ENCODE measurements at regions of chr15 and their contacts with region 1.

Region 1: DNA sequence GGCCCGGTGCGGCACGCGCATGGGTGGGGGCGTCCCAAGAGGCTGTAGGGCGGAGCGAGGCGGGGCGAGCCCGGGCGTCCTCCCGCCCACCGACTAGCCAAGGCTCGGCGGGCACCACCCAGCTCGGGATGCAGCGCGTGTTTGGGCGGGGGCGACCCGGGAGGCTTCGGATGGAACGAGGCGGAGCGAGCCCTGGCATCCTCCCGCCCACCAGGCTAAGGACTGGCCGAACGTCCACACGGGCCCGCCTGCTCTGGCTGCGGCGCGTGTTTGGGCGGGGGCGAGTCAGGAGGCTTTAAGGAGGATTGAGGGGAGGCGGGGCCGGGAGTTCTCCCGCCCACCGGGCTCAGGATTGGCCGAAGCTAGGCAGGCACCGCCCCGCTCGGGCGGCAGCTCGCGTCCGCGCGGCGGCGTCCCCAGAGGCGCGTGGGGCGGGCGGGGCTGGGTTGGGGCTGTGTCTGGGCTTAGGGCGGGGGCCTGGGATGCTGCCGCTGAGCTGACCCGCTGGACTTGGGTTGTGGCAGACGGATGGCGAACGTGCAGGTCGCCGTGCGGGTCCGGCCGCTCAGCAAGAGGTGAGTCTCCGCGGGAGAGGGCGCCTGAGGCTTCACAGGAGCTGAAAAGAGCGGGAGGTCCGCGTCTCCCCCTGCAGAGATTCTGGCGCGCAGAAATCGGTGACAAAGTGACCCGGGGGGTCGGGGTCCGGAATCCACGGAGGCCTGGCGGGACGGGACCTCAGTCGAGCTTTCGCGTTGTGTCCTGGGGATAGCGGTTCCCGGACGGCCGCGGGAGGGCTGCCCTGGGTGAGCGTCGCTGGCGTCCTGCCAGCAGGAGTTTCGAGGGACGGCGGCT is at the start of gene STARD9:
- DNase-seq: peak; percentile 98
- ATAC-seq: peak; percentile 95
- H3K4me3 ChIP-seq: peak within 1 kb of the TSS; percentile 89
- H3K27ac ChIP-seq: no peak within 1 kb of the TSS
- H3K4me1 ChIP-seq: peaks cover 18% of the 10 kb centered on the region
- H3K27me3 ChIP-seq: no peaks in the 10 kb centered on the region
- CTCF ChIP-seq: no peak
- total RNA-seq, gene STARD9: 4.9 and 5.0 TPM in 2 replicates

Region 2: GRCh38 chr15:42107473-42107872 is 467.9 kb before region 1 on chr15:
- CTCF ChIA-PET with region 1: no interaction called
- POLR2A ChIA-PET with region 1: no interaction called
- intact Hi-C with region 1: no loop called
- DNase-seq: no peak
- ATAC-seq: no peak
- H3K4me3 ChIP-seq: no peak overlapping the region
- H3K27ac ChIP-seq: no peak overlapping the region
- H3K4me1 ChIP-seq: peaks cover 2% of the 10 kb centered on the region; the same call in 1 of the 2 replicates
- H3K27me3 ChIP-seq: no peaks in the 10 kb centered on the region
- CTCF ChIP-seq: no peak

Region 3: GRCh38 chr15:42495361-42496212 is 79.8 kb before region 1 on chr15 and contains the start of gene SNAP23:
- CTCF ChIA-PET with region 1: no interaction called
- POLR2A ChIA-PET with region 1: interaction called, 16 read pairs
- intact Hi-C with region 1: no loop called
- DNase-seq: peak; percentile 92
- ATAC-seq: peak; percentile 89
- H3K4me3 ChIP-seq: peak within 1 kb of the TSS; percentile 77
- H3K27ac ChIP-seq: peak within 1 kb of the TSS; percentile 61
- H3K4me1 ChIP-seq: peaks cover 36% of the 10 kb centered on the region
- H3K27me3 ChIP-seq: no peaks in the 10 kb centered on the region
- CTCF ChIP-seq: no peak
- total RNA-seq, gene SNAP23: 40.2 and 45.1 TPM in 2 replicates

Region 4: GRCh38 chr15:43008150-43008549 is 432.7 kb after region 1 on chr15:
- CTCF ChIA-PET with region 1: no interaction called
- POLR2A ChIA-PET with region 1: no interaction called
- intact Hi-C with region 1: no loop called
- DNase-seq: no peak
- ATAC-seq: no peak
- H3K4me3 ChIP-seq: no peak overlapping the region
- H3K27ac ChIP-seq: no peak overlapping the region
- H3K4me1 ChIP-seq: no peaks in the 10 kb centered on the region
- H3K27me3 ChIP-seq: no peaks in the 10 kb centered on the region
- CTCF ChIP-seq: no peak

Region 5: DNA sequence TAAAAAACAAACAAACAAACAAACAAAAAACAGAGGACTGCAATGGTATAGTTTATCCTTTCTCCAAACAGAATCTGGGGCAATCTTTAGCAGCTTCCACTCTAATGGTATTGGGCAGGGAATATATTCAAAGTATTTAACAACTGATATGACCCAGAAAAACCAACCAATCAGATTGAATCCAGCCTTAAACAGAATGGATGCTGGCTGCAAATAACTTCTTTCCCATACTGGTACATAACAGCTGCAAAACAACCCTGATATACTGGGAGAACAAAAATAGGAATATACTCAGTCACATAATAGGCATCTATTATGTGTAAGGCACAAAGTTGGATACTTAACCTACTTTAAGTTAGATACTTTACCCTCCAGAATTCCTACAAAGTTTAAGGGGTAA is 481.3 kb after region 1 on chr15:
- CTCF ChIA-PET with region 1: no interaction called
- POLR2A ChIA-PET with region 1: no interaction called
- intact Hi-C with region 1: no loop called
- DNase-seq: no peak
- ATAC-seq: no peak
- H3K4me3 ChIP-seq: no peak overlapping the region
- H3K27ac ChIP-seq: no peak overlapping the region
- H3K4me1 ChIP-seq: no peaks in the 10 kb centered on the region
- H3K27me3 ChIP-seq: no peaks in the 10 kb centered on the region
- CTCF ChIP-seq: no peak